Panc1 (cell line): ENCODE measurements at regions of chr20 and their contacts with region 1.

Region 1: GRCh38 chr20:63223221-63224207 is 7.6 kb upstream of the YTHDF1 start:
- DNase-seq: no peak
- ATAC-seq: peak; percentile 69
- H3K4me3 ChIP-seq: no peak overlapping the region
- H3K27ac ChIP-seq: peak overlapping the region; percentile 54
- H3K4me1 ChIP-seq: peaks cover 24% of the 10 kb centered on the region
- H3K27me3 ChIP-seq: no peaks in the 10 kb centered on the region
- CTCF ChIP-seq: peak; percentile 94

Region 2: DNA sequence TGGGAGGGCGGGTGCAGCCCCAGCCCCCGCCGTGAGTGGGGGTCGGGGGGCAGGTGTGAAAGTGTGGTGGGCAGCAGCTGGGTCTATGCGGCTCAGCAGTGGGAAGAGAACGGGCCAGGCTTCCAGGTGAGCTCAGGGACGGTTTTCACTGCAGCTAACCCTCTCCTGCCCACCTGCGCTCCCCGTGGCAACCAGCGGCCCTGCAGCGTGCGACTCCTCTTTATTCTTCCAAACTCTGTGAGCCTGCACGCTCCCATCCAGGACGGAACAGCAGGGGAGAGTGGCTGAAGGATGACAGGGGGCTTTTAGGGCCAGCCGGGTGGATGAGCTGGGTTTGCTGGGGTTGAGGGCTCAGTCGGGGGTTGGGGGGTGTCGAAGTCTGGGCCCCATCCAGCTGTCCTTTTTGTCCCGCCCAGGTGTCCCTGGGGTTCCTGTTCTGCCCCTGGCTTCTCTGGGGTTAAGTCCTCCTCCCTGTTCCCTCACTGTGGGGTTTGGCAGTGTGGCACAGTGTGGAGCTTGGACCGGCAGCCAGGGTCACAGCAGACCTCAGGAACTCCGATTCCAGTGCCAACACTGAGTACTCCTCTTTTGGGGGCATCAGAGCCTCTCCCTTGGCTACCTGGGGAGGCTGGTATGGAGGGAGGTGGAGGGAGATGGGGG is 11.4 kb after region 1 on chr20:
- CTCF ChIA-PET with region 1: interaction called, 52 read pairs
- POLR2A ChIA-PET with region 1: interaction called, 3 read pairs
- in situ Hi-C with region 1: no loop called
- intact Hi-C with region 1: no loop called
- DNase-seq: no peak
- ATAC-seq: peak; percentile 70
- H3K4me3 ChIP-seq: no peak overlapping the region
- H3K27ac ChIP-seq: peak overlapping the region; percentile 75
- H3K4me1 ChIP-seq: peaks cover 77% of the 10 kb centered on the region
- H3K27me3 ChIP-seq: no peaks in the 10 kb centered on the region
- CTCF ChIP-seq: peak; percentile 83

Region 3: DNA sequence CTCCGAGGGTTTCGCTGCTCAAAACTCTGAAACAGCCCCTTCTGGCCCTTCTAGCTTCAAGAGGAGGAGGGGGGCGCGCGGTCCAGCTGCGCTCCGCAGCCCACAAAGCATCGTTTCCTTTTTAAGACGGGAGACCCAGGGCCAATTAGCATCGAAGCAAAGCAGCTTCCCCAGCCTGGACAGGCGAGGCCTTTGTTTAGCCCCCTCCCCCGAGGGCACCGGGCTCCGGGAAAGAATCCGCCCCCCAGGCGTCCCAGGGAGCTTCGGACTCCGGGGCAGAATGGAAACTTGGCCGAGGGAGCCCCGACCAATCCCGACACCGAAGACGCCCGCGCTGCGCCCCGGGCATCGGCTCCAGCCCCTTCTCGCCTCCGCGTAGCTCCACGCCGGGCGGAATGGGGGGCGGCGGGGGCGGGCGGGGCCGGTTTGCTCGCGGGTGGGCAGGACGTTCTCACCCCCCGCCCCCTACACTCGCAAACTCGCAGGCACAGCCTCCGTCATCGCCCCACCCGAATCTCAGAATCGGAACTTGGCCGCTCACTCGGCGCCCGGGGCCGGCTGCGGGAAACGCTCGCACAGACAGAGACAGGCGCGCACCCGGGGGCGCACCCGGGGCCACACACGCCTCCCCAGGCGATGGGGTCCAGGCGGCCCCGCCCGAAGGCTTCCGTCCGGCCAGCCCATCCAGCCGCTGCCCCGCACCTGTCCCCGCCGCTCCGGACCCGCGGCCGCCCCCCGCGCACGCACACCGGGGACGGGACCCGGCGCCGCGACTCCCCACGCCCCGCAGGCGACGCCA is 30.1 kb after region 1 on chr20:
- CTCF ChIA-PET with region 1: interaction called, 37 read pairs
- POLR2A ChIA-PET with region 1: no interaction called
- in situ Hi-C with region 1: no loop called
- intact Hi-C with region 1: no loop called
- DNase-seq: no peak
- ATAC-seq: no peak
- H3K4me3 ChIP-seq: peak overlapping the region; percentile 30 to 35
- H3K27ac ChIP-seq: no peak overlapping the region
- H3K4me1 ChIP-seq: peaks cover 20% of the 10 kb centered on the region
- H3K27me3 ChIP-seq: no peaks in the 10 kb centered on the region; the same call in 1 of the 2 replicates
- CTCF ChIP-seq: no peak

Region 4: GRCh38 chr20:63272584-63273579 is 49.4 kb after region 1 on chr20 and contains the start of gene ARFGAP1:
- CTCF ChIA-PET with region 1: interaction called, 3 read pairs
- POLR2A ChIA-PET with region 1: no interaction called
- in situ Hi-C with region 1: loop called (anchors 5 kb)
- intact Hi-C with region 1: no loop called
- DNase-seq: no peak
- ATAC-seq: peak; percentile 97
- H3K4me3 ChIP-seq: peak within 1 kb of the TSS; percentile 95 to 99
- H3K27ac ChIP-seq: peak within 1 kb of the TSS; percentile 82
- H3K4me1 ChIP-seq: peaks cover 15% of the 10 kb centered on the region
- H3K27me3 ChIP-seq: no peaks in the 10 kb centered on the region
- CTCF ChIP-seq: no peak
- total RNA-seq, gene ARFGAP1: 110 TPM

Region 5: DNA sequence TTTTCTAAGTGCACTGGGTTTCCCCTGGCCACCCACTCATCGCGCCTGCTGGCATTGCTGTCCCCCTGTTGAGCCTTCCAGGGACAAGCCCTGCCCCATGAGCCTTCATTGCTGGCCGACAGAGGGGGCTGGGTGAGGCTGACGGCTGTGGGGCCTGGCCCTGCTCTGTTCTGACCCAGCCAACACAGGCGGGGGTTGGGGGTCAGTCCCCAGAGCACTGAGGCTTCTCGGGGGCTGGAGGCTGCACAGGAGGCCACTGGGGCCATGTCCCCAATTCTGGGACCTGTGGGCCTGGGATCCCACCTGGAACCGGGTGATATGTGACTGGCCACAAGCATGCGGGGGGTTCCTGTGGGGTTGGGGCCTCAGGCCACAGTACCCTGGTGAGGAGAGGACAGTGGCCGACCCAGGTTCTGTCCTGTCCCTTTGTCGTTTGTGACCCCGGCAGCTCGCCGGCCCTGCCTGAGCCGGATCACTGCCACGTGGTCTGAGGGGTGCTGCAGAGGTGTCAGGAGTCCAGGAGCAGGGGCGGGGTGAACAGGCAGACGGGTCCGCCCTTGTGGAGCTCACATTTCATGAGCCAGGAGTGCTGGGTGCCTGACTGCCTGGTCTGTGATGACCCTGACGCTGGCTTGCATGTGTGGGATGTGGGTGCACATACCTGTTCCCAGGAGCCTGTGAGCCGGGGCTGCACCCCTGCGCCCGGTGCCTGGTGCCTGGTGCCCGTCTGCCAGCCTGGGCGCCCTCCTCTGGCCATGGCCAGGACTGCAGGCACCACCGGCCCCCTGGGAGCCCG is 67.4 kb after region 1 on chr20:
- CTCF ChIA-PET with region 1: interaction called, 13 read pairs
- POLR2A ChIA-PET with region 1: no interaction called
- in situ Hi-C with region 1: no loop called
- intact Hi-C with region 1: loop called (anchors 5 kb)
- DNase-seq: no peak
- ATAC-seq: peak; percentile 61
- H3K4me3 ChIP-seq: no peak overlapping the region
- H3K27ac ChIP-seq: no peak overlapping the region
- H3K4me1 ChIP-seq: peaks cover 13% of the 10 kb centered on the region
- H3K27me3 ChIP-seq: no peaks in the 10 kb centered on the region
- CTCF ChIP-seq: peak; percentile 92

Region 6: GRCh38 chr20:63342561-63343459 is 119.3 kb after region 1 on chr20:
- CTCF ChIA-PET with region 1: no interaction called
- POLR2A ChIA-PET with region 1: no interaction called
- in situ Hi-C with region 1: no loop called
- intact Hi-C with region 1: no loop called
- DNase-seq: no peak
- ATAC-seq: no peak
- H3K4me3 ChIP-seq: no peak overlapping the region
- H3K27ac ChIP-seq: no peak overlapping the region
- H3K4me1 ChIP-seq: no peaks in the 10 kb centered on the region
- H3K27me3 ChIP-seq: peaks cover 2% of the 10 kb centered on the region; the same call in 1 of the 2 replicates
- CTCF ChIP-seq: no peak

Region 7: GRCh38 chr20:63381807-63382322 is 158.4 kb after region 1 on chr20:
- CTCF ChIA-PET with region 1: interaction called, 16 read pairs
- POLR2A ChIA-PET with region 1: no interaction called
- in situ Hi-C with region 1: no loop called
- intact Hi-C with region 1: no loop called
- DNase-seq: peak; percentile 5
- ATAC-seq: peak; percentile 64
- H3K4me3 ChIP-seq: no peak overlapping the region
- H3K27ac ChIP-seq: no peak overlapping the region
- H3K4me1 ChIP-seq: no peaks in the 10 kb centered on the region; the same call in 1 of the 2 replicates
- H3K27me3 ChIP-seq: no peaks in the 10 kb centered on the region
- CTCF ChIP-seq: peak; percentile 99

Region 8: GRCh38 chr20:63819224-63819921 is 595.9 kb after region 1 on chr20:
- CTCF ChIA-PET with region 1: interaction called, 10 read pairs
- POLR2A ChIA-PET with region 1: no interaction called
- in situ Hi-C with region 1: no loop called
- intact Hi-C with region 1: no loop called
- DNase-seq: no peak
- ATAC-seq: peak; percentile 65
- H3K4me3 ChIP-seq: peak overlapping the region; percentile 24 to 40
- H3K27ac ChIP-seq: peak overlapping the region; percentile 78
- H3K4me1 ChIP-seq: peaks cover 13% of the 10 kb centered on the region
- H3K27me3 ChIP-seq: no peaks in the 10 kb centered on the region
- CTCF ChIP-seq: no peak